ENCODE measurements at regions of chr2 and their contacts with region 1.

Region 1: DNA sequence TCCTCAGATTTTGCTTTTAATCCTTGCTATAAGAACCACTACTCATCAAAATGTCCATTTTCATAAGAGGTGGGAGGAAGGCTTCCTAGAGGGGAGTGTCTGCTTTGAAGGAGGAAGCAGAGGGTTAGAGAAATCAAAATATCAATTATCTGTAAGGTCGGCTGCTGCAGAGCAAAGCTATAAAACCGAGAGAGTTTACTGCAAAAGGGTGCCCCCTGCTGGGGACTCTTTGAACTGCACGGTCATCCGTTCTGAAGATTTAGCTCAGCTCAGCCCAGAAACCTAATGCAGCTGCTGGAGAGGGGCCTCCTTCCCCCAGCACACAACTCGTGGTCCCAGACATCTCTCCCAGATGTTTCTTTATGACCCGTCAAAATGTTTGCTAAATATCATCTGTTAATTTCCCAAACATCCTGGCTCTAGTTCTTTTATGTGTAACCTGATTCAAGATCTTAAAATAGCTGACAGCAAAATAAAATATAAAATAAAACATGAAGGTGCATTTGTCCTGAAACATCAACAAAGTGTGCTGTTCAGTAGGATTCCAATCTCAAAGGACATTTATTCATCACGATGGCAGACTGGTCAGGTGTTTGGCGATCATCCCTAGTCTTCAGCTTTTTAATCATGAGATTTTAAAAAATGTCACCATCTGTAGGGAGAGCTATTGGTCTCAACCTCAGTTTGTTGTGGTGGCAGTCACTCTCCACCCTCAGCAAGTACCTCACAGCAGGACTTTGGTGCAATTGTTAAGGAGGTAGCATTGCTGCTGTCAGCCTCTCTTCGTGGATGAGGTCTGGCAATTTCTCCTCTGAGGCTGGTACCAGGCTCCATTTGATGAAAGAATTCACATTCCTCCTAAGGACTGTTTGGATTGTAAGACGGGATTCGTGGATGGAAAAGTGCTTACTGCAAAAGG is 185.9 kb downstream of the MTX2 start:
- DNase-seq: peak; percentile 75
- H3K4me3 ChIP-seq: peak overlapping the region; percentile 5; the same call in 1 of the 2 replicates
- H3K27ac ChIP-seq: peak overlapping the region; percentile 90
- H3K4me1 ChIP-seq: peaks cover 39% of the 10 kb centered on the region
- H3K27me3 ChIP-seq: no peaks in the 10 kb centered on the region

Region 2: DNA sequence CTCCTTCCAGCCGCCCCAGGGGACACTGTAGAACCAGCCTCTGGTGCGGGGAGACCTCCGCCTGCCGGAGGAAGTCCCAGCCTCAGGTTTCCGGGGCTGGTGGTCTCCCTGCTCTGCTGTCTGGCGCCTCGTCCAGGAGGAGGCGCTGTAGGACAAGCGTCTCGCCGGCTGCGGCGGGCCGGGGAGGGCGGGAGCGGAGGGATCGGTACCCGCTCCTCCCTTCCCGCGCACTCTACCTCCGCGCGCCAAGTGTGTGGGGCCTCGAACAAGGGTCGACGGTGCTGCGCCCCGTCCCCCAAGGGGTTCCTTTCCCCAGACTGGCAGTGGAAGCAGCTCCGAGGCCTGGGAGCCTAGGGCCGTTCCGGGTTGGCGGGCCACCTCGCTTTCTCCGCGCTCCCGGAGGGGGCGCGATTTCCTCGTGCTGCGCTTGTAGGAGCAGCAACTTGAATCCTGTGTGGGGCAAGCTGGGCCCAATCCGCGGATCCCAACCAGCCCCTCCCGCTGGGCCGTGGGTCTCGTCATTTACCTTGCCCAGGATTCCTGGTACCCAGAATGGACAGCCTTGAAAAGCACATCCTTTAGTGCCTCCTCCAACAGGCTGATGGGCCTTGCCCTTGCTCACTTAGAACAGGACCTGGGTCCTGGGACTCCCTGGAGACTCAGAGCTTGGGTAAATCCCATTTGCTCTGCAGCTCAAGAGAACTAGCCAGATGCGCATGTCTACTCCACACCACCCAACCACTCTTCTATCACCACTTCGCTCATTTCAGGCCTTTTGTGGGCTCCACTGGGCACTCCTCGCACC is 314.4 kb before region 1 on chr2:
- in situ Hi-C with region 1: loop called (anchors 10 kb)
- DNase-seq: peak; percentile 89
- H3K4me3 ChIP-seq: peak overlapping the region; percentile 85
- H3K27ac ChIP-seq: peak overlapping the region; percentile 96
- H3K4me1 ChIP-seq: peaks cover 22% of the 10 kb centered on the region
- H3K27me3 ChIP-seq: no peaks in the 10 kb centered on the region

Region 3: DNA sequence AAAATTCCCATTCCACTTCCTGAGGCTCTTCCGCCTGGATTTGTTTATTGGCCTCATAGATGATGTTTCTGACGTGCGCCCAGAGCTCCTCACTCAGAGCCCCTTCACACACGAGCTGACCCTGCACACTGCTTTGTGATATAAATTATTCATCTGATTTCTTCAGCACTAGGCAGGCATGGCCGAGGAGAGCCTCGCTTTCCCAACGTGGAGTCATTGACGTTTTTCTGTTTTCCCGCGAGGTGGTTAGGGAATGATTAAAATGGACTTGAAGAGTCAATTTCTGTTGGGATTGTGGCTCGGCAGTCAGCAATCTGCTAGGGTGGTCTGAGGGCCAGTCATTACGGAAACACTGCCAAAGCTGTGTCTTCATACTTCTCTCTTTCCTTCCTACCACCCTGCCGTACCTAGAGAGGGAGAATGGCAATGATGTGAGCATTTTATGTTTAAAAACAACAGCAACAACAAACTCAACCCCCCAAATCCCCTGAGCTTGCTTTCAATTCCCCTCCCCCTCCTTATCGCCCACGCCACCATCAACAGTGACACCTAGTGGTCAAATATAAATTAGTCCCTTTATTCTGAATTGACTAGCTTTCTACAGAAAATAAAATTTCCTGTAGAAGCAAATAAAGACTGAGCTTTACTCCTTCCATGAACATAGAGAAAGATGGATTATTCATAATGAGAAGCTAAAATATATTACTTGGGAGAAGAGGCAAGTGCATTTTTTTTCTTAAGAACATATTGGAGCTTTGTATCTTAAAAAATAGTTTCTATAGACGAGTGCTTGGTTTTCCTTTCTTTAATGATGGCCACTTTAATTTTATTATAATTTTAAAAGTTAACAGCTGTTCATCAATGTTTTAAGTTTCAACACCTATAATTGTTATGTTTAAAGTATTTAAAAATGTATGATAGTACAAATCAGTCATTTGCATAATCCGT is 99.2 kb after region 1 on chr2:
- in situ Hi-C with region 1: loop called (anchors 5 kb)
- DNase-seq: peak; percentile 79
- H3K4me3 ChIP-seq: peak overlapping the region; percentile 66
- H3K27ac ChIP-seq: peak overlapping the region; percentile 79
- H3K4me1 ChIP-seq: peaks cover 22% of the 10 kb centered on the region
- H3K27me3 ChIP-seq: no peaks in the 10 kb centered on the region

Region 4: DNA sequence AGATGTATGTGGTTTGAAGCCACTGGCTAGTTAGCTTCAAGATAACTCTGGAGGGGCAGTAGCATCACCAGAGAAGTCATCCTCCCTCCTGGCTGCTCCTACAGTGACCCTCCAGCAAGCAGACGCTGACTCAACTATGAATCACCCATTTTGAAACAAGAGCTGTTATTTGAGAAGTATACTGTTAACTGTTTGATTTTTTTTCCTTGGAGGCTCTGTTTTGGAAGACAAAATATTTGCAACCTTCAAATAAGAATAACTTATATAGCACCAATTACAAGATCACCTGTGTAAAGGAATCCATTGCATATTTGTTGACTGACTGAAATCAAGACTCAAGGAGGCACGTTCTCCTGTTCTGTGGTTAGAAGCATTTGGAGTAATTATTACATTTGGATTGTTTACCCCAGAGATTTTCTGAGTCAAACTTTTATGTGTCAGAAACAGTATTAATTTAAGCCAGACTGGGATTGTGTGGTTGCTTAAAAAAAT is 127.9 kb after region 1 on chr2:
- in situ Hi-C with region 1: no loop called
- DNase-seq: peak; percentile 97
- H3K4me3 ChIP-seq: peak overlapping the region; percentile 59
- H3K27ac ChIP-seq: peak overlapping the region; percentile 92
- H3K4me1 ChIP-seq: peaks cover 36% of the 10 kb centered on the region
- H3K27me3 ChIP-seq: no peaks in the 10 kb centered on the region

Region 5: DNA sequence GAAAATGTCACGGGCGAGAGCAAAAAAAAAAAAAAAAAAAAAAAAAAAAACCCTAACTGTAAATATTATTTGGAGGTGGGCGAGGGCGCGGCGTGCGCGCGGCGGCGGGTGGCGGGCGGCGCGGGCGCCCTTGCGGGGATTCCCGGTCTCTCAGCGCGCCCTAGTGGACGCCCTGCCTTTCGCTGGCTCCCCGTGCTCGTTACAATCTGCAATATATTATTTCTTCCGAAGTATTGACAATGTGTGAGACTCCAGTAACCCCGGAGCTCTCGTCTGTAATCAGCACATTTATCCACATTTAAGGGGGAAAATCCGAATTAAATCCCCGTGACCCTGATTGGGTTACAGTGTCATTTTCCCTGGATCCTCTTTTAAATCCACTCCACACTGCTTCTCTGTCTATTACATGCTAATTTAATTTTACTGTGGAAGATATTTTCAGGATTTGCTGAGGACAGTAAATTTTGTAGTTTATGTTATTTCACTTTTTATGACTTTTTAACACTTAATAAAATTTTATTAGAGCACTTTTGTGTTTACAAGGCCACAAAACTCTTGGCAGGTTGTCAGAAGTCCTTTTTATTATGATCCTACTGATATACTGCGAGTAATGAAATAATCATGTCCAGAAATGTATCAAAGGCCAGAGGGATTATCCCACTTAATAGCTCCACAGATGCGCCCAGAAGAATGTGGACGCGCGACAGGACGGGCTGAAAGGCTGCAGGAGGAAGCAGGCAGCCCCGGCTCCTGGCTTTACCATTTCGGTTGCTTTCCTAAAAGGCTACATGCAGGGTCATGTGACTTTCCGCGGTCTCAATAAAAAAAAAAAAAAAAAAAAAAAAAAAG is 183.2 kb after region 1 on chr2:
- in situ Hi-C with region 1: loop called (anchors 10 kb)
- DNase-seq: peak; percentile 91
- H3K4me3 ChIP-seq: peak overlapping the region; percentile 96
- H3K27ac ChIP-seq: peak overlapping the region; percentile 94
- H3K4me1 ChIP-seq: peaks cover 62% of the 10 kb centered on the region
- H3K27me3 ChIP-seq: no peaks in the 10 kb centered on the region

Measured in GM23248 (cell line).